ENCODE measurements at regions of chr16 and their contacts with region 1.

Region 1: DNA sequence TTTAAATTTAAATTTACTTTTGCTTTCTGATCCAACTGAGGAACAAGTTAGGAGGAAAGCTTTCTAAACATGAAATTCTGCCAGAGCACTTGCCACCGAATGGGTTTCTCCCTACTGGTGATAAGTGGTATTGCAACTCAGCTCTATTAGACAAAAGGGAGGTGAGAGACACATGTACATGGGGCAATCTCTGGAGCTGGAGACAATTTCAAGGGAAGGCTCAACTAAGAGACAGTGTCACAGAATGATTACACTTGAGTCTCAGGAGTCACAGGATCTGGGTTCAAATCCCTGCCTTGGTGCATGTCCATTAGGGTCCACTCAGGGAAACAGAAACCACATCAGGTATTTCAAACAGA is 37.4 kb downstream of the SOCS1 start:
- DNase-seq: no peak
- H3K27ac ChIP-seq: no peak overlapping the region
- CTCF ChIP-seq: peak; percentile 29; the same call in 1 of the 2 replicates

Region 2: DNA sequence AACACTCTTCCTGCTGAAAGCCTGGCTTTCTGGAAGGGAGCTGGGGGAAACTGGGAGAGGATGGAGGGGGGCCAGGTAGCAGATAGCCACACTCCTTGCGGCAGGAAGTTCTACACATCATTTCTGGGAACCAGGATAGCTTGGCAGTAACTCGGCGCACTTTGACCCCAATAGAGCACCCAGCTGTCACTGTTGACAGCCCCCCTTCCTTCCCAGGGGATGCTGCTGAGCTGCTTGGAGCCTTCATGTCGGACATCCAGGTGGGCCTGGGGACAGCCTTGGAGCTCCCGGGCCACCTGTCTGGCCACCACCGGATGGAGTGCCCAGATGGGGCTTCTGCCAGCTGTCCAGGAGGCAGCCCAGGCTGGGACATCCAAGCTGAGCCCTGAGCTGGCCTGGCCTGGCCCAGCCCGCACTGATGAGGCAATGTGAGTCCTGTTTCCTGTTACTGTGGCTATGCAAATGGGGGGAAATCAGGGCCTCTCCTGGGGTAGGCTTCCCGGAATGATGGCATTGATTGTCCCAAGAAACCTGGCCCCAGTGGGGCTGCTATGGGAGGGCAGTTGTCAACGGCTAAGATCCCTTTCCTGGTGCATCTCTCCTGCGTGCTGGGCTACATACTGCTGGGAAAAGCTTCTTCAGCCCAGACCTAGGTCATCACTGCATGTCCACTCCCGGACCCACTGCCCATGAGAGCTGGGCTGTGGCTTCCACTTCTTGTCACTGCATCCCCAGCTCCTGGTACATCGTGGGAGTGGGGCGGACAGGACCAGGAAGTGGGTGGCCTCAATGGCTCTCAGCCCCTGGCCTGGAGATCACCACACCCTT is 12.6 kb before region 1 on chr16:
- CTCF ChIA-PET with region 1: interaction called, 12 read pairs
- POLR2A ChIA-PET with region 1: no interaction called
- DNase-seq: no peak
- H3K27ac ChIP-seq: peak overlapping the region; percentile 30
- CTCF ChIP-seq: no peak

Region 3: DNA sequence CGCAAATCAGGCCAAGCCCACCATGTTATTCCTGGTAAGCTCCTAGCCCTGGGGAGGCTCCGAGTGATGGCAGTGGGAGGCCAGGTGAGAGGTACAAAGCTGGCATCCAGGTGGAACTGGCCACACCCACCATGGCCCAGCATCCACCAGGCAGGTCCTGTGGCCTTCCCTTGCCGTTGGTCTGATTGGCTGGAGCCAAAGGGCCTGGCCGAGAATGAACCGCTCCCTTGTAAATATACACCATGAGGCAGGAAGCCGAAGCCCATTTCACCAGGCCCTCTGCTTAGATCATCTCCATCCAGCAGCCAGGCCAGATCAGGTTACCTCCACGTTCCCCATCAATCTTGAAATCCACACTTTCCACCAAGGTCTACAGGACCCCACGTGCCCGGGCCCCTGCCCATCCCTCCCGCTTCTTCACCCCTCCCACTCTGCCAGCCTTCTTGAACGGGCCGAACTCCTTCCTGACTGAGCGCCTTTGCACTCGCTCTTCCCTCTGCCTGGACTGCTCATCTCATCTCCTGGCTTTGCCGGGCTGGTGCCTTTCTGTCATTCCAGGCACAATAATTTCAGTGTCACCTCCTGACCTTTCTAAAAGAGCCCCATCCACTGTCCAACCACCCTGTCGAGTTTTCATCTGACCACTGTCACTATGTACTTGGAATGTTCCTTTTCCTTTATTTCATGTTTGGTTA is 31.7 kb after region 1 on chr16:
- CTCF ChIA-PET with region 1: no interaction called
- POLR2A ChIA-PET with region 1: no interaction called
- DNase-seq: no peak
- H3K27ac ChIP-seq: no peak overlapping the region
- CTCF ChIP-seq: no peak

Measured in RWPE1 (cell line).